PC-9 (cell line): ENCODE measurements at regions of chr16 and their contacts with region 1.

Region 1: DNA sequence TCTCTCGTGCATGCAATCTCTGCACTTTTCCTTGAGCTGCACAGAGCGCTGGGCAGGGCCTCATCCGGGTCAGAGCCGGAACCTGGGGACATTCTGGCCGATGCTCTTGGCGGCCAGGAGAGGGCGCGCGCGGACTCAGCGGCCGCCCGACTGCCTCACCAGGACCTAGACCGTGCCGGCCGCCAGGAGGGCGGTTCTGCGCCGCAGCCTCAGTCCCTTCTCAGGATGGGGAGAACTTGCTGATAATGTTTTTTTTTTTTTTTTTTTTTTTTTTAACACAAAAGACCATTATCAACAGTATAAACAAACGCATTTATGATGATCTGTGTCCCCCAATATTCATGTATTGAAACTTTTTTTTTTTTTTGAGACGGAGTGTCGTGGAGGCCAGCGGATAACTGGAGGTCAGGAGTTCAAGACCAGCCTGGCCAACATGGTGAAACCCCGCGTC is 8.1 kb upstream of the FLYWCH2 start:
- DNase-seq: peak; percentile 57 to 66
- H3K4me3 ChIP-seq: no peak overlapping the region
- H3K27ac ChIP-seq: no peak overlapping the region
- H3K4me1 ChIP-seq: 0 out of 2 replicates have a peak, but pooled peaks cover 6% of the 10 kb centered on the region
- H3K27me3 ChIP-seq: no peaks in the 10 kb centered on the region
- CTCF ChIP-seq: peak; percentile 89

Region 2: GRCh38 chr16:2745116-2745890 is 129.6 kb before region 1 on chr16:
- CTCF ChIA-PET with region 1: interaction called, 17 read pairs
- POLR2A ChIA-PET with region 1: no interaction called
- intact Hi-C with region 1: no loop called
- DNase-seq: no peak
- H3K4me3 ChIP-seq: no peak overlapping the region
- H3K27ac ChIP-seq: no peak overlapping the region
- H3K4me1 ChIP-seq: peaks cover 1% of the 10 kb centered on the region
- H3K27me3 ChIP-seq: no peaks in the 10 kb centered on the region
- CTCF ChIP-seq: no peak

Region 3: GRCh38 chr16:2919511-2920255 is 44.7 kb after region 1 on chr16:
- CTCF ChIA-PET with region 1: no interaction called
- POLR2A ChIA-PET with region 1: no interaction called
- intact Hi-C with region 1: loop called (anchors 2 kb)
- DNase-seq: peak; percentile 38 to 57
- H3K4me3 ChIP-seq: no peak overlapping the region
- H3K27ac ChIP-seq: no peak overlapping the region
- H3K4me1 ChIP-seq: peaks cover 18% of the 10 kb centered on the region
- H3K27me3 ChIP-seq: no peaks in the 10 kb centered on the region
- CTCF ChIP-seq: peak; percentile 96

Region 4: DNA sequence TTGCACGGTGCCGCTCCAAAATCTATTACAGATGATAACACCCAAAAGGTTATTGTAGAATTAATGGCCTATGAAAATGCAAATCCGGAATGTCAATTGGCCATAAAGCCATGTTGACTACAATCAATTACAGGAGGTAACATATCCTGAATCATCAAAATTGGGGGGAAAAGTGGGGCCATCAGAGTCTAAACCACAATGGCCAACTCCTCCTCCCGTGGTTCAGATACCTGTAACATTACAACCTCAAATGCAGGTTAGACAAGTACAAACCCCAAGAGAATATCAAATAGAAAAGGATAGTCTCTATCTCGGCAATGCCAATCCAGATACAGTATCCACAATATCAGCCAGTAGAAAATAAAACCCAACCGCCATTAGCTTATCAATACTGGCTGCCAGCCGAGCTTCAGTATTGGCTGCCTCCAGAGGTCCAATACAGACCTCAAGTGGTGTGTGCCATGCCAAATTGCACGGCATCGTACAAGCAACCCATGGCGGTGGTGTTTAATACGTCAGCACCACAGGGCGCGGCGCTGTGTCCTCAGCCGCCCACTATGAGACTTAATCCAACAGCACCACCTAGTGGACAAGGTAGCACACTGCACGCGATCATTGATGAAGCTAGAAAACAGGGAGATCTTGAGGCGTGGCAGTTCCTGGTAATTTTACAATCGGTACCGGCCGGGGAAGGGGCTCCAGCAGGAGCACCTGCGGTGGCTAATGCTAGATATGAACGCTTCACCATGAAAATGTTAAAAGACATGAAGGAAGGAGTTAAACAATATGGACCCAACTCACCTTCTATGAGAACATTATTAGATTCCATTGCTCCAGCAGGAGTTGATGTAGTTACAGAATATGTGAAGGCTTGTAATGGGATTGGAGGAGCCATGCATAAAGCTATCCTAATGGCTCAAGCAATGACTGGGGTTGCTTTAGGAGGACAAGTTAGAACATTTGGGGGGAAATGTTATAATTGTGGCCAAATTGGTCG is 52.0 kb after region 1 on chr16:
- CTCF ChIA-PET with region 1: interaction called, 13 read pairs
- POLR2A ChIA-PET with region 1: no interaction called
- intact Hi-C with region 1: loop called (anchors 2 kb)
- DNase-seq: peak; percentile 70 to 84
- H3K4me3 ChIP-seq: no peak overlapping the region
- H3K27ac ChIP-seq: no peak overlapping the region
- H3K4me1 ChIP-seq: no peaks in the 10 kb centered on the region
- H3K27me3 ChIP-seq: no peaks in the 10 kb centered on the region
- CTCF ChIP-seq: peak; percentile 96

Region 5: GRCh38 chr16:2963723-2964474 is 89.0 kb after region 1 on chr16 and contains the start of gene KREMEN2:
- CTCF ChIA-PET with region 1: no interaction called
- POLR2A ChIA-PET with region 1: interaction called, 36 read pairs
- intact Hi-C with region 1: loop called (anchors 10 kb)
- DNase-seq: peak; percentile 70 to 91
- H3K4me3 ChIP-seq: peak within 1 kb of the TSS; percentile 91
- H3K27ac ChIP-seq: no peak within 1 kb of the TSS
- H3K4me1 ChIP-seq: peaks cover 5% of the 10 kb centered on the region; the same call in 1 of the 2 replicates
- H3K27me3 ChIP-seq: no peaks in the 10 kb centered on the region
- CTCF ChIP-seq: no peak
- total RNA-seq, gene KREMEN2: 8.4 and 16.2 TPM in 2 replicates